Activated B cell treated with CpG ODN at 0.5 μM for 24 hours (primary cell): ENCODE measurements at regions of chr15 and their contacts with region 1.

Region 1: GRCh38 chr15:72155635-72156616 is 37.7 kb downstream of the SENP8 start:
- DNase-seq: peak; percentile 69
- ATAC-seq: peak; percentile 85
- H3K4me3 Mint-ChIP-seq: peak overlapping the region; percentile 82
- H3K27ac Mint-ChIP-seq: no peak overlapping the region
- H3K4me1 Mint-ChIP-seq: peaks cover 6% of the 10 kb centered on the region
- H3K27me3 Mint-ChIP-seq: no peaks in the 10 kb centered on the region
- CTCF ChIP-seq: no peak

Region 2: GRCh38 chr15:71448688-71449114 is 707.2 kb before region 1 on chr15:
- CTCF ChIA-PET with region 1: interaction called, 3 read pairs
- POLR2A ChIA-PET with region 1: no interaction called
- intact Hi-C with region 1: loop called (anchors 10 kb)
- DNase-seq: no peak
- ATAC-seq: no peak
- H3K4me3 Mint-ChIP-seq: no peak overlapping the region
- H3K27ac Mint-ChIP-seq: no peak overlapping the region
- H3K4me1 Mint-ChIP-seq: no peaks in the 10 kb centered on the region
- H3K27me3 Mint-ChIP-seq: peaks cover 8% of the 10 kb centered on the region
- CTCF ChIP-seq: no peak

Region 3: DNA sequence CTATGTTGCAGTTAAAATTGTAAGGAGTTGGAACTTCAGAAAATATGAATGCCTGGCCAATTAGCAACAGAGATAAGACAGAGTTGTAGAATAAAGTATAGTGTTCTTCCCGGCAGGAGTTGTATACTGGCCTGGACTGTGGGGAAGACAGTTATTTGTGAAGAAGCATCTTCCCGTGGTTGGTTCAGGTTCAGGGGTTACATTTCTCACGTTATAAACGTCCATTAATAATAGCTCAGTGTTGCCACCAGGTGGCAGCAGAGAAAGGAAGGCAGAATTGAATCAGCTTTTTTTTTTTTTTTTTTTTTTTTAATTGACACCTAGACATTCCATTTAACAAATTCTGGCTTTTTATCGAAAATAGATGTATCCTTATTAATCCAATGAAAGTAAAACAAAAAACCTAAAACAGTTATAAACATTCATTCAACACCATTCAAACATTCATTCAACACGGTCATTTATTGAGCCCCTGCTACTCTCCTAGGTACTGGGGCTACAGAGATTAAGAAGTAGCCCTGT is 412.0 kb before region 1 on chr15:
- CTCF ChIA-PET with region 1: interaction called, 43 read pairs
- POLR2A ChIA-PET with region 1: no interaction called
- intact Hi-C with region 1: loop called (anchors 1 kb)
- DNase-seq: no peak
- ATAC-seq: peak; percentile 37
- H3K4me3 Mint-ChIP-seq: no peak overlapping the region
- H3K27ac Mint-ChIP-seq: no peak overlapping the region
- H3K4me1 Mint-ChIP-seq: no peaks in the 10 kb centered on the region
- H3K27me3 Mint-ChIP-seq: peaks cover 10% of the 10 kb centered on the region
- CTCF ChIP-seq: peak; percentile 92

Region 4: DNA sequence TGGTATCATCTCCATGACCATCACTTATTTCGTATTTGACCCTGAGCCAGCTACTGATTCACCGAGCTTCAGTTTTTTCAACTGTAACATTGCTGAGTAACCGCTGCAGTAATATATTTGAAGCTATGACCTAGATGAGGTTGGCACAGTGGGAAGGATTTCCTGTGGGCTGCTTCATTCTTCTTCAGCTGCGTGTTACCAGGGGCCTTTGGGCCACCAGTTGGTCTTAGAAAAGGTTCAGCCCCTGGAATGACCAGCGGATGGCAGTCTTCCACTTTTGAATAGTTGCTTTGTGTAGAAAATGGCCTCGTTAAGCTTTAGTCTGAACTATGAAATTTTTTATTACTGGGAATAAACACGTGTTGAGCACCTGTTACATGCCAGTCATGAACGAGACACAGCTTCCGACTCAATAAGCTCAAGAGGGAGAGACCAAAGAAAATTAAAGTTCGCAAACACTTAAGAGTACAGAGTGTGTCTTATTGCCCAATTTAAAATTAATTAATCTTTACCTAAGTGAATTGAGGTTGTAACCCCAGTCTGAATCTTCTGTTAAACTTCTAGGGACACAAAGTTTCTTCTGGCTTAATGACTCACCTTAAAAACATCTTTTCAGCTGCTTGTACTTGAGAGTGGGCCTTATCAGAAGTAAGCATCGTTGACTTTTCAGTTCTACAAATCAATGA is 403.2 kb before region 1 on chr15:
- CTCF ChIA-PET with region 1: interaction called, 12 read pairs
- POLR2A ChIA-PET with region 1: no interaction called
- intact Hi-C with region 1: no loop called
- DNase-seq: no peak
- ATAC-seq: no peak
- H3K4me3 Mint-ChIP-seq: no peak overlapping the region
- H3K27ac Mint-ChIP-seq: no peak overlapping the region
- H3K4me1 Mint-ChIP-seq: no peaks in the 10 kb centered on the region
- H3K27me3 Mint-ChIP-seq: peaks cover 17% of the 10 kb centered on the region
- CTCF ChIP-seq: no peak

Region 5: GRCh38 chr15:71780115-71780976 is 375.6 kb before region 1 on chr15:
- CTCF ChIA-PET with region 1: interaction called, 50 read pairs
- POLR2A ChIA-PET with region 1: no interaction called
- intact Hi-C with region 1: loop called (anchors 1 kb)
- DNase-seq: no peak
- ATAC-seq: peak; percentile 54
- H3K4me3 Mint-ChIP-seq: no peak overlapping the region
- H3K27ac Mint-ChIP-seq: no peak overlapping the region
- H3K4me1 Mint-ChIP-seq: peaks cover 5% of the 10 kb centered on the region
- H3K27me3 Mint-ChIP-seq: peaks cover 14% of the 10 kb centered on the region
- CTCF ChIP-seq: no peak

Region 6: GRCh38 chr15:72042839-72043238 is 113.1 kb before region 1 on chr15:
- CTCF ChIA-PET with region 1: no interaction called
- POLR2A ChIA-PET with region 1: no interaction called
- intact Hi-C with region 1: loop called (anchors 2 kb)
- DNase-seq: no peak
- ATAC-seq: no peak
- H3K4me3 Mint-ChIP-seq: no peak overlapping the region
- H3K27ac Mint-ChIP-seq: no peak overlapping the region
- H3K4me1 Mint-ChIP-seq: no peaks in the 10 kb centered on the region
- H3K27me3 Mint-ChIP-seq: no peaks in the 10 kb centered on the region
- CTCF ChIP-seq: no peak

Region 7: GRCh38 chr15:72110355-72110754 is 45.6 kb before region 1 on chr15:
- CTCF ChIA-PET with region 1: no interaction called
- POLR2A ChIA-PET with region 1: no interaction called
- intact Hi-C with region 1: no loop called
- DNase-seq: no peak
- ATAC-seq: no peak
- H3K4me3 Mint-ChIP-seq: no peak overlapping the region
- H3K27ac Mint-ChIP-seq: no peak overlapping the region
- H3K4me1 Mint-ChIP-seq: peaks cover 13% of the 10 kb centered on the region
- H3K27me3 Mint-ChIP-seq: no peaks in the 10 kb centered on the region
- CTCF ChIP-seq: no peak